GM12878 (cell line): ENCODE measurements at regions of chr2 and their contacts with region 1.

Region 1: GRCh38 chr2:171319164-171319810 is 114.5 kb downstream of the METTL8 start:
- DNase-seq: peak; percentile 98
- ATAC-seq: peak; percentile 66
- H3K4me3 ChIP-seq: peak overlapping the region; percentile 50; the same call in 1 of the 2 replicates
- H3K27ac ChIP-seq: peak overlapping the region; percentile 100
- H3K4me1 ChIP-seq: peaks cover 78% of the 10 kb centered on the region
- H3K27me3 ChIP-seq: no peaks in the 10 kb centered on the region
- CTCF ChIP-seq: no peak
- EP300 ChIP-seq: peak; percentile 97 to 98
- POLR2A ChIP-seq: peak; percentile 42; the same call in 1 of the 2 replicates
- RAD21 ChIP-seq: peak; percentile 40; the same call in 1 of the 2 replicates

Region 2: DNA sequence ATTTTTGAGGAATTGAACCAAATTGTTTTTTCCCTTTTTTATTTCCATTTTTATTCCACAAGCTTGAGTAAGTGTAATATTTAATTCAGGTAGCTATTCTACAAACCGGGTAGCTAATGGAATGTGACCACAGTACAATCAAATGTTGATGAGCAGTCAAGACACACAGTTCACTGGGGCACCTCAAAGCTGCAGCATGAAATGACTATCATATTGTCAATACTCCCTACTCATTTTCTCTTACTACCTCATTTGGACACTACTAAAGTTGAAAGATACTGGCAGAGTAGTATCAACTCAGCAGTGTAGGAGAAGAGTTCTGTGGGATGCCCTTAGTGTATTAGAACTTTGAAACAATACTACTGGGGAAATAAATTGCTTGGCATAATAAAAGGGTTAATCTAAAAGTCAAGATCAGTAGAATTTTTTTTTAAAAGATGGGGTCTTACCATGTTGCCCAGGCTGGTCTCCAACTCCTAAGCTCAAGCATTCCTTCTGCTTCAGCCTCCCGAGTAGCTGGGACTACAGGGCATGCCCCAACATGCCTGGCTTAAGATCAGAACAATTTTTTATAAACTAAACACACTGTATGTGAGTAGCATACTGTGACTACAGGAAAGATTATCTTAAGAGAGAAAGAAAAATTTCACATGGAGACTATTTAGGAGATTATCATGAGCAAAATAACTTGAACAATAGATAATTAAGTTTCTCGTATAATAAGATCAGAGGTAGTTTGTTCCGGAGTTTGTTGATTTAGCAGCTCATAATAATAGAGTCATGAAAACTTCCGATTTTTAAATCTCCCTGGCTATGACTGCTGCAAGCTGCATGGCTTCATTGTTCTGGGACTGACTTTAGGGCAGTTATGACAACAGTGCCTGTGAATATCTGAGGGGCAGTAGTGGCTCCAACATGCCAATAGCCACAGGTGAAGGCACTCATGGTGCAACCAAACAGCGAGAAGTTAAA is 1097.7 kb before region 1 on chr2:
- CTCF ChIA-PET with region 1: no interaction called
- POLR2A ChIA-PET with region 1: no interaction called
- RAD21 ChIA-PET with region 1: no interaction called
- SMC1A ChIA-PET with region 1: no interaction called
- in situ Hi-C with region 1: no loop called
- intact Hi-C with region 1: no loop called
- DNase-seq: no peak
- ATAC-seq: peak; percentile 56
- H3K4me3 ChIP-seq: no peak overlapping the region
- H3K27ac ChIP-seq: peak overlapping the region; percentile 31; the same call in 1 of the 2 replicates
- H3K4me1 ChIP-seq: peaks cover 7% of the 10 kb centered on the region
- H3K27me3 ChIP-seq: no peaks in the 10 kb centered on the region
- CTCF ChIP-seq: no peak
- EP300 ChIP-seq: no peak
- POLR2A ChIP-seq: no peak
- RAD21 ChIP-seq: no peak

Region 3: DNA sequence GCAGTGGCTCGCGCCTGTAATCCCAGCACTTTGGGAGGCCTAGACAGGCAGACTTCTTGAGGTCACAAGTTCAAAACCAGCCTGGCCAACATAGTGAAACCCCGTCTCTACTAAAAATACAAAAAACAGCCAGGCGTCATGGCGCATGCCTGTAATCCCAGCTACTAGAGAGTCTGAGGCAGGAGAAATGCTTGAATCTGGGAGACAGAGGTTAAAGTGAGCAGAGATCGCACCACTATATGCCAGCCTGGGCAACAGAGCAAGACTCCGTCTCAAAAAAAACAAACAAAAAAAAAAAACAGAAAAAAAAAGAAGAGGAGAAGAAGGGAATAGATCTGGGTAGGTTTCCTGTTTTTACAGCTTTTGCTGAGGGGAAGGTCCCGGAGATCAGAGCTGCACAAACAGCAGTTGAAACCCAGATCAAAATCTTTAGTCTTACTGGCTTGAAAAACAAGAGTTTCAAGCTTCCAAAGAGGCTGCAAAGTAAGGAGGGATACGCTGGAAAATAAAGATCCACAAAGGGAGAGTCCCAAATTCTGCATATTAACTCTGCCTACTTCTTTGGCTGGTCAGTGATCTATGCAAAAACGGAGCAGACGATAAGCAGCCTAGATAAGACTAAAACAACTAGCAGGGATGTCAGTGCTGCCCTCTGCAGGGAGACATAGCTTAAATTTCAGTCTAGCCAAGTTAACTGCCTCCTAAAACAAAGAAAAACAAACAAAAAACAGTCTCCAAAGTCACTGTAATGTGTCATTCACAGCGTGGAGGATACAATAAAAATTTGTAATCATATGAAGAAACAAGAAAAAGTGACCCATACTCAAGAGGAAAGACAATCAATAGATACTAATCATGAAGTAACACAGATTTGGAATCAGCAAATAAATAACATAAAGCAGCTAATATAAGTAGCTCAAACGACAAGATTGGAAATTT is 232.7 kb before region 1 on chr2:
- CTCF ChIA-PET with region 1: interaction called, 6 read pairs
- POLR2A ChIA-PET with region 1: no interaction called
- RAD21 ChIA-PET with region 1: interaction called, 3 read pairs
- SMC1A ChIA-PET with region 1: interaction called, 7 read pairs
- in situ Hi-C with region 1: no loop called
- intact Hi-C with region 1: loop called (anchors 5 kb)
- DNase-seq: peak; percentile 9
- ATAC-seq: peak; percentile 91
- H3K4me3 ChIP-seq: no peak overlapping the region
- H3K27ac ChIP-seq: peak overlapping the region; percentile 17; the same call in 1 of the 2 replicates
- H3K4me1 ChIP-seq: no peaks in the 10 kb centered on the region; the same call in 1 of the 2 replicates
- H3K27me3 ChIP-seq: no peaks in the 10 kb centered on the region
- CTCF ChIP-seq: peak; percentile 45 to 64 (median 63)
- EP300 ChIP-seq: no peak
- POLR2A ChIP-seq: no peak
- RAD21 ChIP-seq: 0 out of 2 replicates have a peak, but pooled peaks have one; percentile 8

Region 4: DNA sequence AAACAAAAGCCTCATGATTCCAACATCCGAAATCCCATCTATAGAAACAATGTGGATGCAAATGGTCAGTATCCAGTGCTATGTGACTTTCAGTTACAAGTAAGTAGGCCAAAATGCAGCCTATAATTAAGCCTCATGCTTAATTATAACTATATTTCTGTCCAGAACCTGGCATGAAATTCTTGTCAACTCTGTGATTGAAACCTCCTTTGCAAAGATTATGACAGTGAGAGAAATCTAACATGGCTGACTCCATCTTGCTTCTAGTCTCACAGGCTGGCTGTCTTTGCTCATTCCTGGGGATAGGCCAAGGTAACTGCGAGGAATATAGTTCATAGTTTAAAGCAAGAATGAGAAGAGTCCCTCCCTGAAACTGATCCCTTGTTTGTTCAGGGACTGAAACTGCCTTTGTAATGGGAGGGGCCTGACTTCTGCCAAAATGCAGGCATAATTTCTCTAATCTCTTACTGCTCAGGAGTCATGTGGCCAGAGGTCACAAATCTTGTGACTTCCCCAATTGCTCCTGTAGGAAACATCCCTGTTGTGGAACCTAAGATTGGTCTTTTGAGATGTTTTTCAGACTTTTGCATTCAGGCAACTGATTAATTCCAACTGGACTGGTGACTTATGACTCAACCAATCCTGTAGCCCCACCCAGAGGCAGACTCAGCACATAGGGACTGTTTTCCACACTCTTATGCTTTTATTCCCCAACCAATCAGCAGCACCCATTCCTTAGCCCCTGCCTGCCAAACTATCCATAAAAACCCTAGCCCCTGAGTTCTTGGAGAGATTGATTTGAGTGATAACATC is 74.1 kb before region 1 on chr2:
- CTCF ChIA-PET with region 1: interaction called, 5 read pairs
- POLR2A ChIA-PET with region 1: interaction called, 4 read pairs
- RAD21 ChIA-PET with region 1: interaction called, 33 read pairs
- SMC1A ChIA-PET with region 1: interaction called, 71 read pairs
- in situ Hi-C with region 1: no loop called
- intact Hi-C with region 1: loop called (anchors 5 kb)
- DNase-seq: no peak
- ATAC-seq: no peak
- H3K4me3 ChIP-seq: no peak overlapping the region
- H3K27ac ChIP-seq: no peak overlapping the region
- H3K4me1 ChIP-seq: peaks cover 24% of the 10 kb centered on the region
- H3K27me3 ChIP-seq: no peaks in the 10 kb centered on the region
- CTCF ChIP-seq: no peak
- EP300 ChIP-seq: no peak
- POLR2A ChIP-seq: no peak
- RAD21 ChIP-seq: no peak; the same call in 1 of the 2 replicates

Region 5: GRCh38 chr2:171307560-171307959 is 11.7 kb before region 1 on chr2:
- CTCF ChIA-PET with region 1: interaction called, 9 read pairs
- POLR2A ChIA-PET with region 1: interaction called, 12 read pairs
- RAD21 ChIA-PET with region 1: interaction called, 22 read pairs
- SMC1A ChIA-PET with region 1: interaction called, 41 read pairs
- in situ Hi-C with region 1: no loop called
- intact Hi-C with region 1: no loop called
- DNase-seq: peak; percentile 71
- ATAC-seq: peak; percentile 96
- H3K4me3 ChIP-seq: no peak overlapping the region
- H3K27ac ChIP-seq: peak overlapping the region; percentile 54
- H3K4me1 ChIP-seq: peaks cover 12% of the 10 kb centered on the region
- H3K27me3 ChIP-seq: no peaks in the 10 kb centered on the region
- CTCF ChIP-seq: no peak
- EP300 ChIP-seq: peak; percentile 43 to 73; a peak in 2 of 4 replicates
- POLR2A ChIP-seq: no peak
- RAD21 ChIP-seq: 0 out of 2 replicates have a peak, but pooled peaks have one; percentile 21

Region 6: DNA sequence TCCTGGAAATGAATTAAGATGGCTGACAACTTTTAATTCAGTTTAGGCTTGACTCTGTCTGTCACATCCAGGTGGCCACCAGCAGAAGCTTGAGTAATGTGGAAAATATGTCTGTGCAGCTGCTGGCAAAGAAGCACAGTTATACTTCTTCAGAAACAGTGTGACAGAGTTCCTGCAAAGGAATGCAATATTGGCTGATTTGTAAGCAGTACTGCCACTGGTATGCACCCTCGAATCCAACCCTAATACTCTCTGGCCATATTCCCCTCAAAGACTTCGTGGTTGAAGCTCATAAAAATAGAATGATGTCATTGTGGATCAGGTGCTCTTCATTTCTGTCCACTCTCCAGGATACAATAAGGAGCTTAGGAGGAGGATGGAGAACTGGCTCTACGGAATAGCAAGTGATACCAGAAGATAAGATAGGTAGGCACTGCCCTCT is 28.3 kb after region 1 on chr2:
- CTCF ChIA-PET with region 1: interaction called, 12 read pairs
- POLR2A ChIA-PET with region 1: interaction called, 4 read pairs
- RAD21 ChIA-PET with region 1: interaction called, 26 read pairs
- SMC1A ChIA-PET with region 1: interaction called, 56 read pairs
- in situ Hi-C with region 1: no loop called
- intact Hi-C with region 1: no loop called
- DNase-seq: no peak
- ATAC-seq: peak; percentile 60
- H3K4me3 ChIP-seq: 0 out of 2 replicates have a peak overlapping the region, but pooled peaks have one; percentile 28
- H3K27ac ChIP-seq: peak overlapping the region; percentile 81
- H3K4me1 ChIP-seq: peaks cover 29% of the 10 kb centered on the region
- H3K27me3 ChIP-seq: no peaks in the 10 kb centered on the region
- CTCF ChIP-seq: no peak
- EP300 ChIP-seq: no peak
- POLR2A ChIP-seq: no peak
- RAD21 ChIP-seq: no peak

Region 7: GRCh38 chr2:171416009-171416926 is 97.0 kb after region 1 on chr2:
- CTCF ChIA-PET with region 1: interaction called, 110 read pairs
- POLR2A ChIA-PET with region 1: interaction called, 168 read pairs
- RAD21 ChIA-PET with region 1: interaction called, 208 read pairs
- SMC1A ChIA-PET with region 1: interaction called, 273 read pairs
- in situ Hi-C with region 1: loop called (anchors 5 kb)
- intact Hi-C with region 1: loop called (anchors 1 kb)
- DNase-seq: peak; percentile 95
- ATAC-seq: peak; percentile 91
- H3K4me3 ChIP-seq: no peak overlapping the region; the same call in 1 of the 2 replicates
- H3K27ac ChIP-seq: peak overlapping the region; percentile 83
- H3K4me1 ChIP-seq: peaks cover 32% of the 10 kb centered on the region
- H3K27me3 ChIP-seq: no peaks in the 10 kb centered on the region
- CTCF ChIP-seq: peak; percentile 83 to 95 (median 88); a peak in 5 of 6 replicates
- EP300 ChIP-seq: peak in 1 of 2 experiments; percentile 50; a peak in 2 of 4 replicates
- POLR2A ChIP-seq: peak; percentile 64
- RAD21 ChIP-seq: peak; percentile 97